ENCODE measurements at regions of chr11 and their contacts with region 1.

Region 1: GRCh38 chr11:57345555-57346211 is 7.5 kb downstream of the P2RX3 start:
- DNase-seq: peak; percentile 60
- H3K4me3 ChIP-seq: no peak overlapping the region
- H3K27ac ChIP-seq: no peak overlapping the region
- H3K4me1 ChIP-seq: no peaks in the 10 kb centered on the region
- H3K27me3 ChIP-seq: no peaks in the 10 kb centered on the region
- CTCF ChIP-seq: peak; percentile 57 to 69

Region 2: DNA sequence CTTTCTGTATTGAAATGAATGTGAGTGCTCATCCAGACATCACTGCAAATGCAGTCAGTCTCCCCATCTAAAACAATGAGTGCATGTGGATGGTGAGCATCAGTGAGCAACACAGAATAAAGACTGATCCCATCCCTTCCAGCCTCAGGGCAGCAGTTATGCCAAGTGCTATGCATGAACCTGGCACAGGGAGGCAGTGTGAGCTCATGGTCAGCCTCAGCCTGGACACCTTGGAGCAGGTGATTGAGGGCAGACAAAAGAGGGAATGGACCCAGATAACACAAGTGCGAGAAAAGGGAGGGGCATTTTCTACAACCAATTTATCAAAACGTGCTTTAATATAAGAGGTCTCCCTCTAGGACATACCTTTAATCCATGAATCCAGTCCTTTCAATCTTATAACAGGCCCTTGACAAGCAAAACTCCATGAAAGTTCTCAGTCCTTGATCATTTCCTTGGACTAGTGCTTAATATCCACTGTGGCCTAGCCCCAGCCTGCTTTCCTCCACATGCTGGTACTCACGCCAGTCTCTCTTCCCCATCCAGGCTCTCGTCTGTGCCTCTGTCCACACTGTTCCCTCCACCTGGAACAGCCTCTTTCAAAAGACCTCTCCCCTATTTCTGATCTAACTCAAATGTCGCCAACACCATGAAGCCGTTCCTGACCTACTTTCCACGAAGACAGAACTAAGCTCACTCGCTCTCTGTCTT is 214.4 kb before region 1 on chr11:
- CTCF ChIA-PET with region 1: no interaction called
- dilution Hi-C with region 1: no loop called
- in situ Hi-C with region 1: no loop called
- intact Hi-C with region 1: loop called (anchors 1 kb)
- DNase-seq: peak; percentile 39
- H3K4me3 ChIP-seq: no peak overlapping the region
- H3K27ac ChIP-seq: no peak overlapping the region
- H3K4me1 ChIP-seq: no peaks in the 10 kb centered on the region
- H3K27me3 ChIP-seq: no peaks in the 10 kb centered on the region
- CTCF ChIP-seq: peak; percentile 78 to 93

Region 3: GRCh38 chr11:57434640-57435546 is 89.2 kb after region 1 on chr11:
- CTCF ChIA-PET with region 1: no interaction called
- dilution Hi-C with region 1: no loop called
- in situ Hi-C with region 1: no loop called
- intact Hi-C with region 1: no loop called
- DNase-seq: peak; percentile 90
- H3K4me3 ChIP-seq: no peak overlapping the region
- H3K27ac ChIP-seq: no peak overlapping the region
- H3K4me1 ChIP-seq: peaks cover 36% of the 10 kb centered on the region
- H3K27me3 ChIP-seq: no peaks in the 10 kb centered on the region
- CTCF ChIP-seq: no peak

Region 4: DNA sequence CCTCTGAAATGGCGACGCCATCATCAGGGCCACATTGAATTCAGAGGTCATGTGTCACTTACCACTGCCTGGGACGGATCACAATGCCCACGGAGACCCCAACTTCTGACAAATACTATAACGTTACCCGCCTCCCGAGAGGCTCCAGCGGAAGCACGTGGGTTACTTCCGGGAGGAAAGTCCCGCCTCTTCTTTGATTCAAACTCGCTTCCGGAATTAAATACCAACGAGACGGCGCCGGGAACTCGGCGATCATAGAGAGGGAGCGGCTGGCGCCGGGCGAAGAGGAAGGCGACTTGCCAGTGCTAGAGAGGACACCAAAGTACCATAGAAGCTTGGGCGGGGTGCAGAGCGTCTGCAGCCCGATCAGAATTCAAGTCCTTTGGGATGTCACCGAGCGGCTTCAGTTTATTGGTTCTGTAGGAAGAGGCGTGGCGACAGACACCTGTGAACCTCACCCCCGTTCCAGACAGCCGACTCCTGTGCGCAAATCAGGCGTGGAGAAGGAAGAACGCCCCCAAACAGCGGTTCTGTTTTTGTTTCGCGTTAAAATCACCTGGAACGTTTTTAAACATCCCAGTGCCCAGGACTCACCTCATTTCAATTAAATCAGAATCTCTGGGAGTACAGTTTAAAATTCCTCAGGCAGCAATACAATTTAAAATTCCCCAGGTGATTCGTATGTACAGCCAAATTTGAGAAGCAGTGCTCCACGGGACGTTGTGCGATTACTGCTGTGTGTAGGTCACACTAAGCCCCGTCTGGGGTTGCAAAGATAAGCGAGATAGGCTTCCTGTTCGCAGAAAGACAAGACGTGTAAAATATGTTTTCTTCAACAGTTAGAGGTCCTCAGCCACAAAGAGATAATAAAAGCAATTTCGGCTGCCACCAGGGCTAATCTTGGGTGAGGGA is 185.2 kb after region 1 on chr11 and contains the start of gene TIMM10:
- CTCF ChIA-PET with region 1: no interaction called
- dilution Hi-C with region 1: no loop called
- in situ Hi-C with region 1: no loop called
- intact Hi-C with region 1: loop called (anchors 1 kb)
- DNase-seq: peak; percentile 99
- H3K4me3 ChIP-seq: peak within 1 kb of the TSS; percentile 55 to 77 (median 75)
- H3K27ac ChIP-seq: peak within 1 kb of the TSS; percentile 65
- H3K4me1 ChIP-seq: peaks cover 21% of the 10 kb centered on the region
- H3K27me3 ChIP-seq: no peaks in the 10 kb centered on the region
- CTCF ChIP-seq: no peak
- total RNA-seq, gene TIMM10: 24.8 to 58.9 TPM

Region 5: DNA sequence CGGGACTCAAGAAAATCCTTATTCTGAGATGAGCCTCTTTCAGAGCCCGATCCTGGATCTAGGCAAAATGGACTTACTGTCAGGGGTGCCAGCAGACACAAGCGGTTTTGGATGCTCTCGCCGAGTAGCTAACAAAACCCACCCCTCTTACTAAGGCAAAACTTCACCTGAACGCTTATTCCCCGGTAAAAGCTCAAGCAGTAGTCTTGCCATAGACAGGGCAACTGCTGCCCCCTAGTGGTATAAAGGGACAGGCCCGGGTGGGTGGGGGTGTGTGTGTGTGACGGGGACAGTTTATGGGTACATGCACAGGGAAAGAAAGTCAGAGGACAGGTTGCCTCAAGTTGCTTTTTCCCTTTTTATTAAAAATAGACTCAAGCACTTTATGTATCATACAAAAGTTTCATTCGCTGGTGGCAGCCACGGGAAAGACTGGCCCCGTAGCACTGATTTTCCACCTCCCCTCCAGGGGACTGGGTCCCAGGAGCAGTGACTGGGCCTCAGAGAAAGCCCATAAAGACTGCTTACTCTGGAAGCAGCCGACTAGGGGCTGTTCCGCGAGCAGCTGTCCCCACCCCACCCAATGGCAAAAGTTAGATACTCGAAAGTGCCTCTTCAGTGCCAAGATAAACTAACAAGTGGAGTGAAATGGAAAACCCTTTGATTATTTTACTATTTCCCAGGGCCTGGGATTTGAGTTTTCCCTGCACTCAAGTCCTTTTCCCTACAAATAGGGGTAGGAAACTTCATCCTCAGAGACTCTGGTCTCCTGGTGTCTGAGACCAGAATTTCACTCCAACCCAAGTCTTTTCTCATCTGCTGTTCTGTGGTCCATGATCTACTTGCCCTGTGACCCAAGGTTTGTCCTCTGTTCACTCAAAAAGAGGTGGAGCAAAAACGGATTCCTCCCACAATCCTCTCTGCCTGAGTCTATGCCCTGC is 299.3 kb after region 1 on chr11:
- CTCF ChIA-PET with region 1: no interaction called
- dilution Hi-C with region 1: no loop called
- in situ Hi-C with region 1: loop called (anchors 10 kb)
- intact Hi-C with region 1: loop called (anchors 1 kb)
- DNase-seq: no peak
- H3K4me3 ChIP-seq: no peak overlapping the region
- H3K27ac ChIP-seq: no peak overlapping the region
- H3K4me1 ChIP-seq: peaks cover 49% of the 10 kb centered on the region
- H3K27me3 ChIP-seq: no peaks in the 10 kb centered on the region
- CTCF ChIP-seq: peak; percentile 63 to 86

Region 6: GRCh38 chr11:58524232-58525036 is 1178.8 kb after region 1 on chr11:
- CTCF ChIA-PET with region 1: no interaction called
- dilution Hi-C with region 1: no loop called
- in situ Hi-C with region 1: loop called in 1 of 2 experiments (anchors 25 kb)
- intact Hi-C with region 1: no loop called
- DNase-seq: peak; percentile 63
- H3K4me3 ChIP-seq: no peak overlapping the region
- H3K27ac ChIP-seq: no peak overlapping the region
- H3K4me1 ChIP-seq: peaks cover 3% of the 10 kb centered on the region
- H3K27me3 ChIP-seq: no peaks in the 10 kb centered on the region
- CTCF ChIP-seq: peak; percentile 90 to 98

Measured in mammary epithelial cell (primary cell).